Astrocyte of the cerebellum (primary cell): ENCODE measurements at regions of chr16 and their contacts with region 1.

Region 1: GRCh38 chr16:11136602-11137001 is 119.4 kb downstream of the SOCS1 start:
- DNase-seq: no peak
- H3K4me3 ChIP-seq: no peak overlapping the region
- CTCF ChIP-seq: no peak

Region 2: GRCh38 chr16:11212798-11213205 is 76.2 kb after region 1 on chr16:
- in situ Hi-C with region 1: loop called (anchors 5 kb)
- DNase-seq: no peak
- H3K4me3 ChIP-seq: no peak overlapping the region
- CTCF ChIP-seq: no peak